H1 (cell line): ENCODE measurements at regions of chr1 and their contacts with region 1.

Region 1: DNA sequence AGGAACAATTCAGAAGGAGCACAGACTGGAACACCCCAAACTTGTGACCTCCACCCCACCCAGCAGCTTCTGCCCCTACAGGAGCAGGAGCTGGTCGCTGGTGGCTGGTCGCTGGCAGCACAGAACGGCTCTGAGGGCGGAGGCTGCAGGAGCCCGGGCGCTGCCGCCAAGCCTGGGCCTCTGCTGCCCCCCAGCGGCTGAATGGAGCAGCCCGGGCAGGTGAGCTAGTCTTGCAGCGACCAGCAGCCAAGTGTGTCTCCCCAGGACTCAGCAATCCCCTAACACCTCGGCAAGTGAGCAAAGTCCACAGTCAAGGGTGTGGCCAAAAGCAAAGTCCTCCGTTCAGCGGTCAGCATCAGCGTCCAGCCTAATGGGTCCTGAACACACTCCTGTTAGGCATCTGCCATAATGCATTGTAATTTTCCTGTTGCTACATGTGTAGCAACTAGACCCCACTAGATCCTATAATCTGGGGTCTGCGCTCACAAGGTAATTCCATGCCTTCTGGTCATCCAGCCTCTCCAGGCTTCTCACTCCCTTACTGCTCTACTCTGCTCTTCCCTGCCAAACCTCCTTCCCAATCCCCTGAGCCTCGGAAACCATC is 12.1 kb upstream of the GJB5 start:
- DNase-seq: peak in 1 of 2 experiments; percentile 98
- H3K4me3 ChIP-seq: no peak overlapping the region
- H3K27ac ChIP-seq: no peak overlapping the region
- H3K4me1 ChIP-seq: peaks cover 0 to 5% (median 1%) of the 10 kb centered on the region in 4 experiments; a peak in 5 of 7 replicates
- H3K27me3 ChIP-seq: peaks cover 0 to 13% (median 5%) of the 10 kb centered on the region in 4 experiments; a peak in 5 of 7 replicates
- CTCF ChIP-seq: peak; percentile 90 to 98 (median 98)
- EP300 ChIP-seq: no peak
- POLR2A ChIP-seq: no peak
- RAD21 ChIP-seq: peak; percentile 98 to 99

Region 2: GRCh38 chr1:34460193-34460592 is 282.6 kb before region 1 on chr1:
- CTCF ChIA-PET with region 1: interaction called, 15 read pairs
- POLR2A ChIA-PET with region 1: interaction called, 3 read pairs
- DNase-seq: peak; percentile 23 to 85
- H3K4me3 ChIP-seq: no peak overlapping the region
- H3K27ac ChIP-seq: no peak overlapping the region
- H3K4me1 ChIP-seq: no peaks in the 10 kb centered on the region
- H3K27me3 ChIP-seq: no peaks in the 10 kb centered on the region
- CTCF ChIP-seq: peak; percentile 71 to 85 (median 85)
- EP300 ChIP-seq: no peak
- POLR2A ChIP-seq: no peak
- RAD21 ChIP-seq: peak; percentile 80 to 85

Region 3: DNA sequence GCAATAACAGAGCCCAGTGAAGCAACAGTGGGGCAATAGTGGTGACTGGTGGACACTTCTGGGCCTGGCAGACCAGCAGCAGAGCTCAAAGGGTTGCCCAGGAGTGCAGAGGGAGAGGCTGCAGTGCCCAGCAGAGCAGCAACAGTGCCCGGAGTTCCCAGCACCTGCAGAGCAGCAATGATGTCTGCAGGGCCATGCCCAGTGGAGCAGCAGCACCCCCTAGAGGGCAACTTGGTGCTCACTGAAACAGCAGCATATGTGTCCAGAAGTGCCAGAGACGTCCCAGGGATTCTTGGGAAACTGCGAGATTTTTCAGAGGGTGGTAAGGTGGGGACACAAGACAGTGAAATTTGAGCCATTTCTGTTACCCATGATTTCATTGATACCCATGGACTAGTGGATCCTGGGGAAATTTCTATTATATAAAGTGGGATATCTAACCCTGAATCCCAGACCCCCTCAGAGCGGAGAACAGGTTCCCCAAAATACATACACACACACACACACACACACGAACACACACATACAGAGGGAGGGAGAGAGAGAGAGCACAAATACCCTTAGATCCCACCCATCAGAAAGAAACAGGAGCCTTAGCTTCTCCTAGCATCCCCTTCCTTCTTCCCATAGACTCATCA is 144.8 kb before region 1 on chr1:
- CTCF ChIA-PET with region 1: interaction called, 25 read pairs
- POLR2A ChIA-PET with region 1: no interaction called
- DNase-seq: peak; percentile 62 to 96
- H3K4me3 ChIP-seq: no peak overlapping the region
- H3K27ac ChIP-seq: no peak overlapping the region
- H3K4me1 ChIP-seq: peaks cover 0 to 4% (median 2%) of the 10 kb centered on the region in 4 experiments; a peak in 2 of 7 replicates
- H3K27me3 ChIP-seq: no peaks in the 10 kb centered on the region
- CTCF ChIP-seq: peak; percentile 89 to 97 (median 96)
- EP300 ChIP-seq: no peak
- POLR2A ChIP-seq: no peak
- RAD21 ChIP-seq: peak; percentile 98 to 99

Region 4: DNA sequence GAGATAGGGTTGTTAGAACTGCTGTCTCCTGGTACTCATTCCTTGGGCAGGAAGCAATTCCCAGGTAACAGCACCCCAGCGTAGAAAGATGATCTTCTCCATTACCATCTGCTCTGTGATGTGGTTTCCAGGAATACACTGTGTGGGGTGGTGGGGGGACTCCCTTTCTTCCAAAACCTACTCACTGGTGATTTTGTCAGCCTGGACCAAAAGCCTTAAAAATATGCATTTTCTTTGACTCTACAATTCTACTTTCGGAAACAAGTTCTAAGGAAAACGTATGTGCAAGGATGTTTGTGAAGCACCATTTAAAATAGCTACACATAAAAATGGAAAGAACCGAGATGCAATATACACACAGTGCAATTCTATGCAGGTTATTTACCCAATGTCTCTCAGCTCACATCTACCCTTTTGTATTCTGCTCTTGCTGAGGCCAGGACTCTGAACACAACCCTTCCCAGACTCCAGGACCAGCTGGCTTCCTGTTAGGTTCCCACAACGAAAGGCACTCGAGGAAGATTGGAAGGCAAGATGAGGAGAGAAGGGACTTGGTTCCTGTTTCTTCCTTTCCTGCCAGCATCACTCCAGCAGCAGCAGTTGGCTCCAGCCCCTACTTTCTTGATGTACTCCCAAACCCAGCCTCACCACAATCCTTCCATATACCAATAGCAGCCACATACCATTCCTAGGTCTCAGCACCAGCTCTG is 21.0 kb before region 1 on chr1:
- CTCF ChIA-PET with region 1: interaction called, 11 read pairs
- POLR2A ChIA-PET with region 1: interaction called, 3 read pairs
- DNase-seq: no peak
- H3K4me3 ChIP-seq: no peak overlapping the region
- H3K27ac ChIP-seq: no peak overlapping the region
- H3K4me1 ChIP-seq: no peaks in the 10 kb centered on the region
- H3K27me3 ChIP-seq: no peaks in the 10 kb centered on the region
- CTCF ChIP-seq: no peak
- EP300 ChIP-seq: no peak
- POLR2A ChIP-seq: no peak
- RAD21 ChIP-seq: no peak

Region 5: GRCh38 chr1:34759503-34760357 is 17.0 kb after region 1 on chr1 and contains the start of gene GJB4:
- CTCF ChIA-PET with region 1: interaction called, 42 read pairs
- POLR2A ChIA-PET with region 1: interaction called, 4 read pairs
- DNase-seq: no peak
- H3K4me3 ChIP-seq: no peak within 1 kb of the TSS
- H3K27ac ChIP-seq: no peak within 1 kb of the TSS
- H3K4me1 ChIP-seq: peaks cover 5 to 24% (median 11%) of the 10 kb centered on the region in 4 experiments
- H3K27me3 ChIP-seq: no peaks in the 10 kb centered on the region; a peak in 1 of 7 replicates
- CTCF ChIP-seq: peak; percentile 6 to 47 (median 28); a peak in 2 of 4 replicates
- EP300 ChIP-seq: no peak
- POLR2A ChIP-seq: no peak
- RAD21 ChIP-seq: no peak
- total RNA-seq, gene GJB4: 0.11 and 0.20 TPM in 2 replicates